ENCODE measurements at regions of chr1 and their contacts with region 1.

Region 1: GRCh38 chr1:103514920-103515503 is 10.5 kb upstream of the RNPC3 start:
- DNase-seq: no peak
- ATAC-seq: no peak

Region 2: DNA sequence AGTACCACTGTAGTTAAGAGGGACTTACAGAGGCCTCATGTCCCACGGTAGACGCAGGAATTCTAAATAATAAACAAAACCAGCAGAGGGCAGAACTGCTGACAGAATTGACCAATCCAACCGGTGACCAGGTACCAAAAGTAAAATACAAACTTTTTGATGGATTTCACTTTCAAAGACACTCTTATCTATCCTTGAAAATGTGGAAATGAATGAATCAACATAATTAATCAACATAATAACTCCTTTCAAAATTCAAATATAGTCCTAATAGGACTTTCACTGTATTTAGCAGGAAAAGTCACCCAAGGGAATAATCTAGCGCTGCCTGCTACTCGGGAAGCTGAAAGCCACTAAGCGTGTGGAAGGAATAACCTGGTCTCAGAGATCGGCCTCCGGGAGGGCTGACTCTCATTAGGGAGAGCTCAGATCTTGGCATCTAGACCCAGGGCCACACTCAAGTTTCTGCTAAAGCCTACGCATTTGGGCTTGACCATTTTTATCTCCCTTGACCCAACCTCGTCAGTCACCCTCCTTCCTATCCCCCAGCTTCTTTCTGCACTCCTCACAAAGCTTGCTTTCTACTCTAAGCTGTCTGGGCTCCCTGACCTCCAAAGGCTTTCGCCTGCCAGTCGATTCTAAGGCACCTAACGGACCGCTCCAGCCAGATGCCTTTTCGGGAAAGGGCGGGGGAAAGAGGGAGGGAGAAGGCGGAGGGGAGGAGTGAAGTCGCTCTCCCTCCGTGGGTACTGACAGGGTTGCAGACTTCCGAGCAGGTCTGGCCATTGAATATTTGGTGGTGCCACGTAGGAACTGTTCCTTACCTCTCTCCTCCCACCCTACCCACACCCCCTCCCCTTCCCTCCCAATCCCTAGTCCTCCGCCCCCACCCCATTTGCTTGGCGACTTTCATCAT is 408.3 kb before region 1 on chr1:
- intact Hi-C with region 1: loop called (anchors 5 kb)
- DNase-seq: no peak
- ATAC-seq: peak; percentile 72

Region 3: DNA sequence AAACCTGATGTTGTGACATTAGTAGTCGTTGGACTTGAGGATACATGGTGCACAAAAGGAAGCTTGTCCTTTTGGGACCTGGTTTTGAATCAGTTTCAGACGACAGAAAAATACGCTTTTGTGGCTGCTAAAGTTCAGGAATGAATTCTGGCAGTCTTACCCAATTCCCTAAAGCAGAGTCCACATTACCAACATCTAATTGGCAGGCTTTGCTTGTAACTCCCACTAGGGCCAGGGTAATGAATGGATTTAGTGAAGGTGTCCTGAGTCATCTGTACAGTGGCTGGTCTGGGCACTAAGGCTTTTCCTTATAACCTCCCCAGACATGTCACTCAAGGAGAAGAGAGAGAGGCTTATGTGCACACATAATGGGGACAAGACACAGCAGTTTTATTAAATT is 55.7 kb before region 1 on chr1:
- intact Hi-C with region 1: no loop called
- DNase-seq: no peak
- ATAC-seq: no peak

Measured in left ventricle myocardium superior (tissue), 1 donor.